ENCODE measurements at regions of chr6 and their contacts with region 1.

Region 1: DNA sequence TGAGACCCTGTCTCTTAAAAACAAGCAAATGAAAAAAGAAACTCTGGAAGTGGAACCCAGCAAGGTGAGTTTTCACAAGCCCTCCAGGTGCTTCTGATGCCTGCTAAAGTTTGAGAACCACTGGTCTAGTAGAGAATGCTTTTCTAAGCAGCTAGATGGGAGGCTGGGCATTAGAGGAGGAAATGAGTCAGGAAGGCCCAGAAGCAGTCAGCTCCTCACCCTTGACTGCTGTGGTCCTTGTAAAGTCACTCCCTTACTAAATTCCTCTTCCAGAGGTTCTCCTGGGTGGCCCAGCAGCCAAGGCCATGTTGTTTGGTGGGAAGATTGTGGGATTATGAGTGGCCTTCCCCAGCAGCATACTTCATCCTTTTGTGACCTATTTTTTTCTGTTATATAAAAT is 52.0 kb upstream of the FYN start:
- DNase-seq: no peak
- H3K4me3 ChIP-seq: no peak overlapping the region
- H3K27ac ChIP-seq: no peak overlapping the region
- H3K4me1 ChIP-seq: no peaks in the 10 kb centered on the region
- CTCF ChIP-seq: no peak

Region 2: GRCh38 chr6:111894272-111894671 is 31.0 kb before region 1 on chr6:
- CTCF ChIA-PET with region 1: no interaction called
- POLR2A ChIA-PET with region 1: no interaction called
- intact Hi-C with region 1: loop called (anchors 5 kb)
- DNase-seq: no peak
- H3K4me3 ChIP-seq: no peak overlapping the region
- H3K27ac ChIP-seq: no peak overlapping the region
- H3K4me1 ChIP-seq: no peaks in the 10 kb centered on the region
- CTCF ChIP-seq: no peak

Region 3: DNA sequence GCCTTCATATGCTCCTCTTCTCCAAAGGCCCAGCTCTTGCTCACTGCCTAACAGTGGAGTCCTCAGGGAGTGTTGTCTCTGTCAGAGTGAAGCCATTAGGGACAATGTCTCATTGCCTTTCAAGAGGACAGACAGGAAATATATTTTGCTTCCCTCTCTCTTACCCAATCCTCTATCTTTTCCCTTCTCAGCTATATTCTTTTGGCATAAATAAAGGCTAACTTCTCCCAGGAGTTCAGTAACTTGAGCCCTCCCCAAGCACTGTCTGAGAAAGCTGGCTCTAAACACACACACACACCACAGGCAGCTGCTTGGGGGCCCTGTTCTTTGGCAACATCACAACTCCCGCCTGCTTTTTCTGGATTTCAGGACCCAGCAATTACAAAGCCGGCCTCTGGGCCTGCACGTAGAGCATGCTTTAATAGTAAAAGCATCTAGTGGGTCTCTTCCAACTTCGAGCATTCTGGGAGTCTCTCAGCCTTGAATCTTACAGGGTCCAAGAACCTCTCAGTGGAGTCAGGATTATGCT is 363.8 kb after region 1 on chr6:
- CTCF ChIA-PET with region 1: no interaction called
- POLR2A ChIA-PET with region 1: no interaction called
- intact Hi-C with region 1: no loop called
- DNase-seq: no peak
- H3K4me3 ChIP-seq: no peak overlapping the region
- H3K27ac ChIP-seq: no peak overlapping the region
- H3K4me1 ChIP-seq: no peaks in the 10 kb centered on the region
- CTCF ChIP-seq: no peak